MCF 10A (cell line): ENCODE measurements at regions of chr9 and their contacts with region 1.

Region 1: GRCh38 chr9:73093740-73094379 is 57.8 kb upstream of the ANXA1 start:
- DNase-seq: no peak
- H3K4me3 Mint-ChIP-seq: peak overlapping the region; percentile 43
- H3K27ac Mint-ChIP-seq: no peak overlapping the region
- H3K4me1 Mint-ChIP-seq: no peaks in the 10 kb centered on the region
- H3K27me3 Mint-ChIP-seq: peaks cover 11% of the 10 kb centered on the region
- CTCF ChIP-seq: no peak

Region 2: DNA sequence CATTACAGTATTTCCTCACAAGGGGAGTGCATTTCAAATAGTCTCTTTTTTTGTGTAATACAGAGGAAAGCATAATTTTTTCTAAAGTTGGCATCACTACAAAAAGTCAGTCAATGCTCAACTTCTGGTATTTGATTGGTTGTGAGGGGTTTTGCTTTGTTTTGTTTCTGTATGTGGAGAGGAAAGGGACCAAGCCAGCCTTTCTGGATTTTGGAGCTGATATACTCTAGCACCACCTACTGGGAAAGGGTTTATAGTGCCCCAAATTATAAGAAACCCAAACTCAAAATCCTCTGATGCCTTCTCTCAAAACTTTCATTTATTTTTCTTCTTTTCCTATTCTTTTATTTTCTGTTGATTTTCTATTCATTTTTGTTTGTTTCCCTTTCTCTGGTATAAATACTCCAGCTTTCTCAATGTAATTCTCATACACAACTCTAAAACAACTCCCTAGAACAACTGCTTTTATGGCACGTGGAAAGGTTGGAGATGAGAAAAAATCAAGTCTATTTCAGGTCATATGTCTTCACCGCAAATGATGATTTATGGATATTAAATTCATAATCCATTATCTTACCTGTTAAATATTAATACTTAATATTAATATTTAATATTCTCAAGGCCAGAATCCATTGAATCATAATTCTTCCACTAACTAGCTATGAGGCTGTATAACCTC is 11.7 kb before region 1 on chr9:
- CTCF ChIA-PET with region 1: interaction called, 68 read pairs
- POLR2A ChIA-PET with region 1: interaction called, 3 read pairs
- intact Hi-C with region 1: no loop called
- DNase-seq: peak; percentile 53
- H3K4me3 Mint-ChIP-seq: no peak overlapping the region
- H3K27ac Mint-ChIP-seq: no peak overlapping the region
- H3K4me1 Mint-ChIP-seq: no peaks in the 10 kb centered on the region
- H3K27me3 Mint-ChIP-seq: peaks cover 71% of the 10 kb centered on the region
- CTCF ChIP-seq: peak; percentile 54

Region 3: DNA sequence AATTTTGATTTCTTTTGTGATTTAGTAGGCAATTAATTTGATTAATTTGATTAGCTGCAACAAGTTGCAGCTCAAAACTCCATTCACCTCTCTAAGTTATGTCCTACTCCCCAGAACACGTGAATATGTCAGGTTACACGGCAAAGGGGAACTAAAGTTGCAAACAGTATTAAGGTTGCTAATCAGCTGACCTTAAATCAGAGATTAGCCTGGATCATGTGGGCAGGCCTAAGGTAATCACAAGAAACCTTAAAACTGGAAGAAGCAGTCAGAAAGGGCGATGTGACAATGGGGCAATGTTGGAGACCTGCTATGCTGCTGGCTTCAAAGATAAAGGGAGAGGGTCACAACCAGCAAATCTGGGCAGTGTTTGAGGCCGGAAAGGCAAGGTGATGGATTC is 10.5 kb after region 1 on chr9:
- CTCF ChIA-PET with region 1: interaction called, 12 read pairs
- POLR2A ChIA-PET with region 1: no interaction called
- intact Hi-C with region 1: no loop called
- DNase-seq: no peak
- H3K4me3 Mint-ChIP-seq: no peak overlapping the region
- H3K27ac Mint-ChIP-seq: no peak overlapping the region
- H3K4me1 Mint-ChIP-seq: peaks cover 7% of the 10 kb centered on the region
- H3K27me3 Mint-ChIP-seq: no peaks in the 10 kb centered on the region
- CTCF ChIP-seq: no peak